Cardiac septum (tissue), 1 donor: ENCODE measurements at regions of chr1 and their contacts with region 1.

Region 1: DNA sequence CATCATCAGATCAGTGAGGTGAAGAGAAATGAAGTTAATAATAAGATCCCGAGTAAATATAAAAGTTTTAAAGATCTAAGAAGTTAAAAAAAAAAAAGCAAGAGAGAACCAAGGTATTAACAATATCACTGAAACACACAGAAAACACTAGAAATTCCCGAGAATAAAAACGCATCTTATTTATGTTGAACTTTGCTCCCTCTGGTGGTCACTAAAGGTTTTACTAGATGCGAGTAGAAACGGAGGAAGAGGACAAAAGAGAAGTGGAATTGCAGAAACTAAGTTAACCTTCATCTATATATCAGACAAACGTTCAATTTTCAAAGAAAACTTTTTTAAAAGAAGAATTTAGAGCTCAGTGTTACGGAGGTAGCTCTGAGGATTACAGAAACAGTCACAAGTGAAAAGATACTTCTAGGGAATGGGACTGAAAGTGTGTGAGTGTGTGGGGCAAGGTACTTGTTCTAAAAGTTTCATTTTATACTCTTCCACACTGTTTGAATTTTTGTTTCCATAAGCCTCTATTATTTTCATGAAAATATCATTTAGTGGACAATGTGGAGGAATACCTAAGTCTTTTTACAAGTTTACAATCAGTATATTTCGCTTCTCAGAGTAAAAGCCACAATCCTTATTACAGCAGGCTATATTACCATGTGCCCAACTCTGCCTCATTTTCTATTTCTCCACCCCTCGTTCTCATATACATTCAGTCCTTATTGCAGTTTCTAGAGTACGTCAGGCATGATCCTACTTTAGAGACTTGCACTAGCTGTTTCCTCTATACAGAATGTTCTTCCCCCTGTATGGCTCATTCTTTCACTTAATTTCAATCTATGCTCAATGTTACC is 19.7 kb downstream of the ACBD6 start:
- DNase-seq: no peak

Region 2: GRCh38 chr1:180188091-180188506 is 294.6 kb before region 1 on chr1:
- intact Hi-C with region 1: loop called (anchors 5 kb)
- DNase-seq: no peak

Region 3: GRCh38 chr1:180252638-180253536 is 229.8 kb before region 1 on chr1:
- intact Hi-C with region 1: loop called (anchors 2 kb)
- DNase-seq: peak; percentile 93